Activated CD8-positive, alpha-beta T cell treated with anti-CD3 and anti-CD28 coated beads for 36 hours (primary cell): ENCODE measurements at regions of chr1 and their contacts with region 1.

Region 1: GRCh38 chr1:9784508-9785133 is 39.1 kb downstream of the CLSTN1 start:
- DNase-seq: peak; percentile 81
- ATAC-seq: peak; percentile 47
- H3K4me3 Mint-ChIP-seq: no peak overlapping the region
- H3K27ac Mint-ChIP-seq: no peak overlapping the region
- H3K4me1 Mint-ChIP-seq: peaks cover 28% of the 10 kb centered on the region
- H3K27me3 Mint-ChIP-seq: no peaks in the 10 kb centered on the region
- CTCF ChIP-seq: peak; percentile 91

Region 2: DNA sequence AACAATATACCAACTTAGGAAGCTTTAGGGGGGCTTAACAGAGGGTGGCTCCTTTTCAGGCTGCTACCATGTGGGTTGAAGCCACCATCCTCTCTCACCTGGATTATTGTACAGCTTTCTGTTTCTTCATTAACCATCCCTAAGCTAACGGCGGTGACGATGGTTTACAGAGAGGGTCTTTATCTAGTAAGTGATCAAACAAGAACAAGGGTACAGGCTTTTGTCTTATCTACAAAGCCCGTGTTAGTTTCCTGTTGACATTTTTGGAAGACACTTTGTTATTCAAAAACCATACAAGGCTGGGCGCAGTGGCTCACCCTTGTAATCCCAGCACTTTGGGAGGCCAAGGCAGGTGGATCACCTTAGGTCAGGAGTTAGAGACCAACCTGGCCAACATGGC is 224.9 kb before region 1 on chr1:
- CTCF ChIA-PET with region 1: no interaction called
- POLR2A ChIA-PET with region 1: no interaction called
- intact Hi-C with region 1: no loop called
- DNase-seq: no peak
- ATAC-seq: no peak
- H3K4me3 Mint-ChIP-seq: no peak overlapping the region
- H3K27ac Mint-ChIP-seq: peak overlapping the region; percentile 30
- H3K4me1 Mint-ChIP-seq: peaks cover 39% of the 10 kb centered on the region
- H3K27me3 Mint-ChIP-seq: no peaks in the 10 kb centered on the region
- CTCF ChIP-seq: no peak

Region 3: DNA sequence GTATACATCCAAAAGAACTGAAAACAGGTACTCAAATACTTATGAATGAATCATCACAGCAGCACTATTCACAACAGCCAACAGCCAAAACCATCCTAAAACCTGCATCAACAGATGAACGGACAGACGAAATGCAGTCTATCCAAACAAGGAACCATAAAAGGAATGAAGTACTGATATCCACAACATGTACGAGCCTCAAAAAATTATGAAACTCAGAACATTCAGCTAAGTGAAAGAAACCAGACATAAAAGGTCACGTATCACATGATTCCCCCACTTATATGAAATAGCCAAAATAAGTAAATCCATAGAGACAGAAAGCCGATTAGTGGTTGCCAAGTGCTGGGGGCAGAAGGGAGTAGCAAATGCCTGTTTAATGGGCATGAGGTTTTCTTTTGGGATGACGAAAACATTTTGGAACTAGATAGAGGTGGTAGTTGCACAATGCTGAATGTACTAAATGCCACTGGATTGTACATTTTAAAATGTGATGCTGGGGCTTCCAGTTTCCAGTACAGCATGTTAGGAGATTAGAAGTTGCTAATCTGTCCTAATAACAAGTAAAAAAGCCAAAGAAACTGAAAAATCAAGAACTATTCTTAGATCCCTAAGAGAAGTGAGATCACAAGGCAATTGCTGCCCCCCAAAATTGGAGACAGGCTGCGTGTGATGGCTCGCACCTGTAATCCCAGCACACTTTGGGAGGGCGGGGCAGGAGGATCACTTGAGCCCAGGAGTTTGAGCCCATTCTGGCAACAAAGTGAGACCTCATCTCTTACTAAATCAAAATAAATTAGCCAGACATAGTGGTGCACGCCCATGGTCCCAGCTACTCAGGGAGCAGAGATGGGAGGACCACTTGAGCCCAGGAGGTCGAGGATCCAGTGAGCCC is 13.9 kb after region 1 on chr1:
- CTCF ChIA-PET with region 1: interaction called, 47 read pairs
- POLR2A ChIA-PET with region 1: interaction called, 6 read pairs
- intact Hi-C with region 1: no loop called
- DNase-seq: no peak
- ATAC-seq: peak; percentile 20
- H3K4me3 Mint-ChIP-seq: no peak overlapping the region
- H3K27ac Mint-ChIP-seq: peak overlapping the region; percentile 56
- H3K4me1 Mint-ChIP-seq: peaks cover 53% of the 10 kb centered on the region
- H3K27me3 Mint-ChIP-seq: no peaks in the 10 kb centered on the region
- CTCF ChIP-seq: no peak

Region 4: GRCh38 chr1:9816199-9816598 is 31.6 kb after region 1 on chr1:
- CTCF ChIA-PET with region 1: interaction called, 25 read pairs
- POLR2A ChIA-PET with region 1: interaction called, 3 read pairs
- intact Hi-C with region 1: no loop called
- DNase-seq: no peak
- ATAC-seq: no peak
- H3K4me3 Mint-ChIP-seq: no peak overlapping the region
- H3K27ac Mint-ChIP-seq: no peak overlapping the region
- H3K4me1 Mint-ChIP-seq: peaks cover 9% of the 10 kb centered on the region
- H3K27me3 Mint-ChIP-seq: no peaks in the 10 kb centered on the region
- CTCF ChIP-seq: no peak

Region 5: GRCh38 chr1:9842781-9843577 is 58.4 kb after region 1 on chr1:
- CTCF ChIA-PET with region 1: interaction called, 53 read pairs
- POLR2A ChIA-PET with region 1: interaction called, 4 read pairs
- intact Hi-C with region 1: no loop called
- DNase-seq: no peak
- ATAC-seq: no peak
- H3K4me3 Mint-ChIP-seq: no peak overlapping the region
- H3K27ac Mint-ChIP-seq: no peak overlapping the region
- H3K4me1 Mint-ChIP-seq: no peaks in the 10 kb centered on the region
- H3K27me3 Mint-ChIP-seq: no peaks in the 10 kb centered on the region
- CTCF ChIP-seq: no peak

Region 6: DNA sequence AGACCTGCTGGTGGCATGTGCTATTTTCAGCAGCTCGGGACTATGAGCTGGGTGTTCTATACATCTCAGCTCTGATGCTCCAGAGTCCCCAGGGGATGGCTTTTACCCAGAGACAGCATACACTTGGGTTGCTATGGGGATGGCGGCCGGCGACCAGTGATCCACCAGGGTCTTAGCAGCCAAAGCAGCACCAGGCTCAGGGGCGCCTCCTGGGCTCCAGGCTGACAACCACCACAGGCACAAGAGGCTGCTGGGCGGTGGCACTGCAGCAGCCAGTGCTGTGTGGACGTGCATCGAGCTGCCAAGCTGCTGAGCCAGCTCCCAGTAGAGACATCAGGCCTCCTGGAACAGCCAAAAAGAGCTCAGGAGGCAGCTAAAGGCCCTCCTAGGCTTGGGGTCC is 76.7 kb after region 1 on chr1:
- CTCF ChIA-PET with region 1: interaction called, 273 read pairs
- POLR2A ChIA-PET with region 1: interaction called, 5 read pairs
- intact Hi-C with region 1: no loop called
- DNase-seq: no peak
- ATAC-seq: no peak
- H3K4me3 Mint-ChIP-seq: no peak overlapping the region
- H3K27ac Mint-ChIP-seq: no peak overlapping the region
- H3K4me1 Mint-ChIP-seq: peaks cover 8% of the 10 kb centered on the region
- H3K27me3 Mint-ChIP-seq: no peaks in the 10 kb centered on the region
- CTCF ChIP-seq: no peak

Region 7: GRCh38 chr1:9996624-9997582 is 212.3 kb after region 1 on chr1 and contains the start of gene RBP7:
- CTCF ChIA-PET with region 1: no interaction called
- POLR2A ChIA-PET with region 1: no interaction called
- intact Hi-C with region 1: no loop called
- DNase-seq: peak; percentile 15
- ATAC-seq: peak; percentile 34
- H3K4me3 Mint-ChIP-seq: peak within 1 kb of the TSS; percentile 62
- H3K27ac Mint-ChIP-seq: no peak within 1 kb of the TSS
- H3K4me1 Mint-ChIP-seq: peaks cover 6% of the 10 kb centered on the region
- H3K27me3 Mint-ChIP-seq: peaks cover 24% of the 10 kb centered on the region
- CTCF ChIP-seq: no peak
- total RNA-seq, gene RBP7: not detected